ENCODE measurements at regions of chr3 and their contacts with region 1.

Region 1: GRCh38 chr3:66253790-66254620 is 33.2 kb downstream of the SLC25A26 start:
- DNase-seq: peak in 4 of 5 donors; percentile 30 to 50 (median 41)
- H3K4me3 ChIP-seq: no peak overlapping the region
- H3K4me3 Mint-ChIP-seq: no peak overlapping the region
- H3K27ac ChIP-seq: no peak overlapping the region
- H3K27ac Mint-ChIP-seq: peak overlapping the region in 2 of 7 donors; percentile 24 to 64
- H3K4me1 ChIP-seq: no peaks in the 10 kb centered on the region
- H3K4me1 Mint-ChIP-seq: peaks cover 4 to 11% (median 5%) of the 10 kb centered on the region in 4 donors
- H3K27me3 ChIP-seq: no peaks in the 10 kb centered on the region
- H3K27me3 Mint-ChIP-seq: no peaks in the 10 kb centered on the region

Region 2: DNA sequence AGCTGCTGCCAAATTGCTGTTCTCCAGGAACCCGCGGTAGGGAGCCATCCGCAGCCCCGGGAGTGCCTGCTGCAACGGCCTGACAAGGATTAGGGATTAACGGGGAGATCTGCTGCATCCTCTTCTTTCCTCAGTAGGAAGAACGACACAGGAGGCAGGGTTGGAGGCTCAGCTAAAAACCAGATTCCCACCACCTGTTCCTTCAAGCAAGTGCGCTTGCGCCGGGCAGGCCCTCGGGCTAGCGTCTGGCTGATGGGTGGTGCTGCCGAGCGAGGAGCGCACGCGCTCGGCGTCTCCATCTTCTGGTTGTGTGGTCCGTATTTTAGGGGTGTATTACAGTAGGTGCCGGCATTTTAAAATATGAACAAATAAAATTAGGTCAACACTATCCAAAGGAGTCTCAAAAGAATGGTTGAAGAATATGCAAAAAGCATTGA is 58.6 kb before region 1 on chr3:
- CTCF ChIA-PET with region 1: no interaction called
- POLR2A ChIA-PET with region 1: no interaction called
- intact Hi-C with region 1: no loop called
- DNase-seq: no peak
- H3K4me3 ChIP-seq: no peak overlapping the region
- H3K4me3 Mint-ChIP-seq: peak overlapping the region in 2 of 8 donors; percentile 17 to 35
- H3K27ac ChIP-seq: no peak overlapping the region
- H3K27ac Mint-ChIP-seq: no peak overlapping the region
- H3K4me1 ChIP-seq: no peaks in the 10 kb centered on the region
- H3K4me1 Mint-ChIP-seq: peaks cover 0 to 2% (median 0%) of the 10 kb centered on the region in 4 donors
- H3K27me3 ChIP-seq: peaks cover 4% of the 10 kb centered on the region
- H3K27me3 Mint-ChIP-seq: peaks cover 22 to 26% of the 10 kb centered on the region in 2 donors

Region 3: GRCh38 chr3:66270701-66271100 is 16.7 kb after region 1 on chr3:
- CTCF ChIA-PET with region 1: interaction called, 11 read pairs
- POLR2A ChIA-PET with region 1: no interaction called
- intact Hi-C with region 1: no loop called
- DNase-seq: no peak
- H3K4me3 ChIP-seq: no peak overlapping the region
- H3K4me3 Mint-ChIP-seq: no peak overlapping the region
- H3K27ac ChIP-seq: no peak overlapping the region
- H3K27ac Mint-ChIP-seq: no peak overlapping the region
- H3K4me1 ChIP-seq: no peaks in the 10 kb centered on the region
- H3K4me1 Mint-ChIP-seq: peaks cover 3 to 8% (median 4%) of the 10 kb centered on the region in 4 donors
- H3K27me3 ChIP-seq: no peaks in the 10 kb centered on the region
- H3K27me3 Mint-ChIP-seq: no peaks in the 10 kb centered on the region

Region 4: GRCh38 chr3:66803206-66803605 is 549.2 kb after region 1 on chr3:
- CTCF ChIA-PET with region 1: interaction called, 11 read pairs
- POLR2A ChIA-PET with region 1: no interaction called
- intact Hi-C with region 1: no loop called
- DNase-seq: no peak
- H3K4me3 ChIP-seq: no peak overlapping the region
- H3K4me3 Mint-ChIP-seq: peak overlapping the region in 1 of 8 donors; percentile 18
- H3K27ac ChIP-seq: no peak overlapping the region
- H3K27ac Mint-ChIP-seq: peak overlapping the region in 1 of 7 donors; percentile 11
- H3K4me1 ChIP-seq: no peaks in the 10 kb centered on the region
- H3K4me1 Mint-ChIP-seq: peaks cover 2 to 11% (median 7%) of the 10 kb centered on the region in 4 donors
- H3K27me3 ChIP-seq: no peaks in the 10 kb centered on the region
- H3K27me3 Mint-ChIP-seq: peaks cover 12 to 14% of the 10 kb centered on the region in 2 donors

Region 5: GRCh38 chr3:66822186-66823008 is 568.4 kb after region 1 on chr3:
- CTCF ChIA-PET with region 1: interaction called, 183 read pairs
- POLR2A ChIA-PET with region 1: interaction called, 5 read pairs
- intact Hi-C with region 1: loop called (anchors 1 kb)
- DNase-seq: peak; percentile 60 to 73 (median 64)
- H3K4me3 ChIP-seq: no peak overlapping the region
- H3K4me3 Mint-ChIP-seq: no peak overlapping the region
- H3K27ac ChIP-seq: no peak overlapping the region
- H3K27ac Mint-ChIP-seq: no peak overlapping the region
- H3K4me1 ChIP-seq: no peaks in the 10 kb centered on the region
- H3K4me1 Mint-ChIP-seq: peaks cover 0 to 2% (median 0%) of the 10 kb centered on the region in 4 donors
- H3K27me3 ChIP-seq: no peaks in the 10 kb centered on the region
- H3K27me3 Mint-ChIP-seq: peaks cover 0 to 4% of the 10 kb centered on the region in 2 donors

Measured in CD4-positive, alpha-beta memory T cell (primary cell).